ENCODE measurements at regions of chr10 and their contacts with region 1.

Region 1: DNA sequence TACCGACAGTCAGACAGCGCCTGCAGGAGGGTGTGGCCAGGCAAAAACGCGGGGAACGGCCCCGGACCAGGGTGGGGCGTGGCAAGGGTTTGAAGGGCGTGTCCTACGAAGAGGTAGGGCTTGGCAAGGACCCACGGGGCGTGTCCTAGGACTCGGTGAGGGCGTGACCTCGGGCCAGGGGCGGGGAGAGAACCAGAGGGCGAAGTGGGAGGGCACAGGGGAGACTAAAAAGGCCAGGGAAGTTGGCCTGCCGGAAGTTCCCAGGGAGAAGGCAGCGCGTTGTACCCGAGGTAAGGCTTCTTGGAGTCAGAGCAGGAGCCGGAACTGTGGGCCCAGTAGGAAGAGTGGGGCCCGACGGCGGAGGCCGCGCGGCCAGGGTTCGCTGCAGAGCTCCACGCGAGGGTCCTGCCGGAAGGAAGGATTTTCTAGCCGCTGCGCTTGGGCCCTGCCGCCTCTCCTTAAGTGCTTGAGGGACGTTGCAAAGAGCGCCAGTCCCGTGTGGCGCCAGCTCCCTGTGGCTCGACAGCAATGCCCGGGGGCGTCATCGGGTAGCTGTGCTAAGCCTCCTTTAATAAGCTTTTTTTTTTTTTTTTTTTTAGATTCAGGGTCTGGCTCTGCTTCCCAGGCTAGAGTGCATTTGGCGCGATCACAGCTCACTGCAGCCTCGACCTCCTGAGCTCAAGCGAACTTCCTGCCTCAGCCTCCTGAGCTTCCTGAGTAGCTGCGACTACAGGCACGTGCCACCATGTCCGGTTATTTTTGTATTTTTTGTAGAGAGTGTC is at the start of gene PTER:
- DNase-seq: peak; percentile 93
- H3K4me3 ChIP-seq: peak within 1 kb of the TSS; percentile 64 to 72 (median 70)
- H3K27ac ChIP-seq: peak within 1 kb of the TSS; percentile 73
- H3K4me1 ChIP-seq: peaks cover 33% of the 10 kb centered on the region
- H3K27me3 ChIP-seq: no peaks in the 10 kb centered on the region
- CTCF ChIP-seq: no peak
- total RNA-seq, gene PTER: 14.8 to 35.5 TPM

Region 2: DNA sequence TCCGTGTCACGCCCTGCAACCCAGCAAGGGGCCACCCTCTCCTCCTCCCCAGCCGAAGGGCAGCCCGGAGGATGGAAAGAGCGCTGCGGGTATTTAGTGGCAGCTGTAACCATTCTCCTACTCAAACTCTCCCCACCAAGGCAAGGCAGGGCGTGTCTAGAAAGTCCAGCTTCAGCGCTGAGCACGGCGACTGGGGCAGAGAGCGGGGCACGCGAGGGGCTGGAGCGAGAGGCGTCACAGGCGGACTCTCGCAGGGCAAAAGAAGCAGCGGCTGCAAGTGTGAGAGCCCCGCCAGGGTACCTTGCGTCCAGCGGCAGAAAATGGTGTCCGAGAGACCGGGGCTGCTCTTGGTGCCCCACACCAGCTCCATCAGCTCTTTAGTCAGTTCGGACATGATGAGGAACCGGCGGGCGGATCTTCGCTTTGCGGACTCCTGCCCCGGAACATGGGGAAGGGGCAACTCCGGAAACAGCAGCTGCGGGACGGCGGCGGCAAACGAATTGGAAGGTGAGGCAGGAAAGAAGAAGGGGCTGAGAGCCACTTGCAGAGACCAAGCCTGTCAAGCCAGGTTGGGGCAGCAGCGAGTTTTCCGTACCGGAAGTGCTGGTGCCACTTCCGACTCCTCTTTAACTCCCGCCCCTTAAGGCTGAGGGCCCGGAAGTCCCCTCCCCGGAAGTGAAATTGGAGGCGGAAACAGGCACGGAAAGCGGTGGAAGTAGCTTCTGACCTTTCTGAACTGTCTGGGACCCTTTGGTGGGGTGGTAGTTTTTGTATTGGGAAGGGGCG is 576.9 kb before region 1 on chr10 and contains the start of gene MINDY3:
- CTCF ChIA-PET with region 1: no interaction called
- dilution Hi-C with region 1: no loop called
- in situ Hi-C with region 1: no loop called
- intact Hi-C with region 1: loop called (anchors 10 kb)
- DNase-seq: peak; percentile 72
- H3K4me3 ChIP-seq: peak within 1 kb of the TSS; percentile 76 to 96 (median 80)
- H3K27ac ChIP-seq: peak within 1 kb of the TSS; percentile 37
- H3K4me1 ChIP-seq: peaks cover 6% of the 10 kb centered on the region
- H3K27me3 ChIP-seq: no peaks in the 10 kb centered on the region
- CTCF ChIP-seq: peak in 1 of 2 donors; percentile 5
- total RNA-seq, gene MINDY3: 28.0 to 29.7 TPM

Region 3: DNA sequence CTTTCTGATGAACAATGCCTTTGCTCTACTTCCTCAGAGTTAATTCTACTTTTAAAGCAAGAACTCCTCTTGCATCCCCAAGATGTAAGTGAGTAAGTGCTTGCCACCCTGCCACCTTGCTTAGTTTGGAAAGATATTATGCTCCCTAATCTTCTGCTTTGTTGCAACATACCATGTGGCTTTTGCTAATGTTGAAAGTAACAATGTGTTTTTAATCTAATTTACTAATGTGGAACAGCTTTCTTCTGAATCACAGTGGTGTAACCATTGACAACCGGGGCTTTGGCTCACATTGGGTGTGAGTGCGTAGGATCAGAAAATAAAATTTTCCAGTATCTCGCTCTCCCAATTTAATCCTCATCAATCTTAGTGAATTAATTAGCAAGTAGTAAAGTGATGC is 254.3 kb before region 1 on chr10:
- CTCF ChIA-PET with region 1: no interaction called
- dilution Hi-C with region 1: no loop called
- in situ Hi-C with region 1: no loop called
- intact Hi-C with region 1: loop called (anchors 5 kb)
- DNase-seq: no peak
- H3K4me3 ChIP-seq: no peak overlapping the region
- H3K27ac ChIP-seq: no peak overlapping the region
- H3K4me1 ChIP-seq: peaks cover 4% of the 10 kb centered on the region
- H3K27me3 ChIP-seq: no peaks in the 10 kb centered on the region
- CTCF ChIP-seq: no peak

Region 4: GRCh38 chr10:16519908-16520861 is 83.2 kb after region 1 on chr10:
- CTCF ChIA-PET with region 1: no interaction called
- dilution Hi-C with region 1: no loop called
- in situ Hi-C with region 1: no loop called
- intact Hi-C with region 1: loop called (anchors 10 kb)
- DNase-seq: no peak
- H3K4me3 ChIP-seq: peak overlapping the region in 2 of 3 experiments; percentile 16 to 44
- H3K27ac ChIP-seq: no peak overlapping the region
- H3K4me1 ChIP-seq: peaks cover 9% of the 10 kb centered on the region
- H3K27me3 ChIP-seq: peaks cover 18% of the 10 kb centered on the region
- CTCF ChIP-seq: no peak

Region 5: DNA sequence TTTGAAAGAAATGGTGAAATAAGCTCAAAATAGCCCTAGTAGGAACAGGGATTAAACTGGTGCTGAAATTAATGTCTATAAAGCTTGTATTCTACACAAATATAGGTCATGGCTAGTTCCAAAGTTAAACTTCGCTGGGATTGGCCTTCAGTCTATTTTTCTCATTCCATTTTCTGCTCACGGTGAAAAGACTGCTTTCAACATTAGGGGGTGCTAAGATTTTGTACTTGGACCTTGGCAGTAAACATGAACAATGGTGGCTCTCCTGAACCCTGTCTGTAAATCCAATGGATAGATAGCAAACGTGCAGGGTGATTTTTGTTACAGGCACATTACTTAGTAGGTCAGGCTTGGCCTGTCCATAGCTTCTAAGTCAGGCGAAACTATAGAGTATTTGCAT is 416.3 kb after region 1 on chr10:
- CTCF ChIA-PET with region 1: no interaction called
- dilution Hi-C with region 1: no loop called
- in situ Hi-C with region 1: no loop called
- intact Hi-C with region 1: no loop called
- DNase-seq: no peak
- H3K4me3 ChIP-seq: no peak overlapping the region
- H3K27ac ChIP-seq: no peak overlapping the region
- H3K4me1 ChIP-seq: peaks cover 18% of the 10 kb centered on the region
- H3K27me3 ChIP-seq: no peaks in the 10 kb centered on the region
- CTCF ChIP-seq: peak in 1 of 2 donors; percentile 21

Measured in mammary epithelial cell (primary cell).